CD4-positive, alpha-beta memory T cell (primary cell): ENCODE measurements at regions of chr7 and their contacts with region 1.

Region 1: GRCh38 chr7:44638611-44639557 is 32.5 kb downstream of the OGDH start:
- DNase-seq: peak; percentile 72 to 91 (median 79)
- H3K4me3 ChIP-seq: peak overlapping the region; percentile 0 to 48
- H3K4me3 Mint-ChIP-seq: peak overlapping the region; percentile 32 to 95 (median 90)
- H3K27ac ChIP-seq: peak overlapping the region; percentile 96
- H3K27ac Mint-ChIP-seq: peak overlapping the region; percentile 97 to 100 (median 100)
- H3K4me1 ChIP-seq: peaks cover 90% of the 10 kb centered on the region
- H3K4me1 Mint-ChIP-seq: peaks cover 57 to 87% (median 79%) of the 10 kb centered on the region in 4 donors
- H3K27me3 ChIP-seq: no peaks in the 10 kb centered on the region
- H3K27me3 Mint-ChIP-seq: no peaks in the 10 kb centered on the region

Region 2: GRCh38 chr7:44581879-44582603 is 56.8 kb before region 1 on chr7 and contains the start of gene TMED4:
- CTCF ChIA-PET with region 1: interaction called, 5 read pairs
- POLR2A ChIA-PET with region 1: interaction called, 94 read pairs
- intact Hi-C with region 1: no loop called
- DNase-seq: peak; percentile 100
- H3K4me3 ChIP-seq: peak within 1 kb of the TSS; percentile 79 to 98
- H3K4me3 Mint-ChIP-seq: peak within 1 kb of the TSS; percentile 90 to 95 (median 92)
- H3K27ac ChIP-seq: peak within 1 kb of the TSS; percentile 89
- H3K27ac Mint-ChIP-seq: peak within 1 kb of the TSS; percentile 97 to 99 (median 98)
- H3K4me1 ChIP-seq: peaks cover 34% of the 10 kb centered on the region
- H3K4me1 Mint-ChIP-seq: peaks cover 18 to 44% (median 32%) of the 10 kb centered on the region in 4 donors
- H3K27me3 ChIP-seq: no peaks in the 10 kb centered on the region
- H3K27me3 Mint-ChIP-seq: no peaks in the 10 kb centered on the region
- total RNA-seq, gene TMED4: 108 to 110 TPM

Region 3: DNA sequence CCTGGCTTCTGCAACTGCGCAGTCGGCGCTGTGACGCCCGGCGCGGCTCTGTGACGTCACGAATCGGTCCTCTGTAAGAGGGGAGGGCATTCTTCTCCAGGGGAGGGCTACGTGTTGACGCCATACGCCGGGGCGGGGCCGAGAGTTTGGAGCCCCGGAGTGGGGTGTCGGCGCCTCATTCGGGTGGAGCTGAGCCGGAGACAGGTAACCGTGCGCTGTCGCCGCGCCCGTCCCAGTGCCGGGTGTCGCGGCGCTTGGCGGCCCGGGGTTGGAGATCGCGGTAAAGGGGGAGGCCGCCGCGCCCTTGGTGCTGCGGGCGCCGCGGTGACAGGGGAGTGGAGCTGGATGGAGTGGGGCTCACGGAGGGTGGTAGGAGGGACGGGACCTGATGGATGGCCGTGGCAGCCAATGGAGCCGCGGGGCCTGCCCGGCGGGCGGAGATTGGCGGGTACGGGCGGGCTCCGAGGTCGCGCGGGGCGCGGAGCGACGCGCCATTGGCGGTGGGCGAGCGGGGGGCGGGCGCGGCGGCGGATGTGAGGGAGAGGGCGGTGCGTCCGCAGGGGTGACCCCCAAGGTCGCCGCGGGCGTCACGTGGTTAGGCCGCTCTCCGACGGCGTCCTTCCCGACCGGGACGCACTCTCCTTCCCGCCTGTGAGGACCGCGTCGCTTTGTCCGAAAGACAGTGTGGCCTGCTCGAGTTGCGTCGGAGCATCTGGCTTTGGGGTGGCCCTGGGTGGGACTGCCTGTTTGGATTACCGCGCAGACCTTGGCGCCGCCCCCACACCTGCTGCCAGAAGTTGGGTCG is 32.2 kb before region 1 on chr7 and contains the start of gene OGDH:
- CTCF ChIA-PET with region 1: interaction called, 48 read pairs
- POLR2A ChIA-PET with region 1: interaction called, 1,226 read pairs
- intact Hi-C with region 1: loop called (anchors 1 kb)
- DNase-seq: peak; percentile 99 to 100 (median 100)
- H3K4me3 ChIP-seq: peak within 1 kb of the TSS; percentile 54 to 63
- H3K4me3 Mint-ChIP-seq: peak within 1 kb of the TSS; percentile 82 to 100 (median 98)
- H3K27ac ChIP-seq: peak within 1 kb of the TSS; percentile 97
- H3K27ac Mint-ChIP-seq: peak within 1 kb of the TSS; percentile 99 to 100 (median 99)
- H3K4me1 ChIP-seq: peaks cover 40% of the 10 kb centered on the region
- H3K4me1 Mint-ChIP-seq: peaks cover 19 to 50% (median 38%) of the 10 kb centered on the region in 4 donors
- H3K27me3 ChIP-seq: no peaks in the 10 kb centered on the region
- H3K27me3 Mint-ChIP-seq: peaks cover 0 to 2% of the 10 kb centered on the region in 2 donors
- total RNA-seq, gene OGDH: 116 to 126 TPM

Region 4: DNA sequence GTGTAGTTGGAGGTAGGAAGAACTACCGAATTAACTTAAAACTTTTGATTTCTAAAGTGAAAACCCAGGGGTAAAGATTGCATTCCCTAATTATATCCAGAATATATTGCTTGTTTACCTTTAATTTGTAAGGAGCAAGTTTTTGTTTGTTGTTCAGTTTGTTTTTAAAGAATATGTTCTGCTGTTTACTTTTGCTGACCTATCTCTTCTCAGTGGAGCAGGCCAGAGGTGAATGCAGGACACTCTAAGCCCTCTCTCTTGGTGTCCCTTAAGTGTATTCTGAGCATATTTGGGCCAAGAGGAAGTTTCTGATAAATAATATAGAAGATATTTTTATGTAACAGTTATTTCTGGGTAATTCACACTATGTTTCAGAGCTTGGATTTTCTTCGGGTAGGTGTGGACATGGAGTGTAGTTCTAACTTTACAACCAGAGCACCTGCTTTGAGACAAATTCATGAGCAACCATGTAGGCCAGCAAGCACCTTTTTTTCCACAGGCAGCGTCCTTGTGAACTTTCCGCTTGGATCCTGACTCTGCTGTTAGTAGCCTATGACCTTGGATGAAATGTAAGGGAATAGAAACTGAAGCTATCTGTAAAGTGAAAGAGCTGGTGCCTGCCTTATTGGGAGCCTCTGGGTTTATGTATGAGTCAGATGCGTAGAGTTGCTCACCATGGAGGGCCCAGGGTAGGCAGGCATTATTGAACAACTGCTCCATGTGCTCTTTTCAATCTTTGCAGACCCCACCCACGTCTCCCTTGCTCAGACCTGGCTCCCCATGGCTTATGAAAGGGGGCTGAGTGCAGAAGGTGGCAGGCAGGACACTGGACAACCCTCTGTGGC is 16.4 kb before region 1 on chr7:
- CTCF ChIA-PET with region 1: interaction called, 44 read pairs
- POLR2A ChIA-PET with region 1: interaction called, 1,226 read pairs
- intact Hi-C with region 1: loop called (anchors 1 kb)
- DNase-seq: peak in 3 of 5 donors; percentile 35 to 60 (median 36)
- H3K4me3 ChIP-seq: peak overlapping the region in 1 of 2 donors; percentile 58
- H3K4me3 Mint-ChIP-seq: peak overlapping the region; percentile 57 to 95 (median 82)
- H3K27ac ChIP-seq: peak overlapping the region; percentile 74
- H3K27ac Mint-ChIP-seq: peak overlapping the region; percentile 91 to 99 (median 96)
- H3K4me1 ChIP-seq: peaks cover 98% of the 10 kb centered on the region
- H3K4me1 Mint-ChIP-seq: peaks cover 72 to 97% (median 86%) of the 10 kb centered on the region in 4 donors
- H3K27me3 ChIP-seq: no peaks in the 10 kb centered on the region
- H3K27me3 Mint-ChIP-seq: no peaks in the 10 kb centered on the region

Region 5: DNA sequence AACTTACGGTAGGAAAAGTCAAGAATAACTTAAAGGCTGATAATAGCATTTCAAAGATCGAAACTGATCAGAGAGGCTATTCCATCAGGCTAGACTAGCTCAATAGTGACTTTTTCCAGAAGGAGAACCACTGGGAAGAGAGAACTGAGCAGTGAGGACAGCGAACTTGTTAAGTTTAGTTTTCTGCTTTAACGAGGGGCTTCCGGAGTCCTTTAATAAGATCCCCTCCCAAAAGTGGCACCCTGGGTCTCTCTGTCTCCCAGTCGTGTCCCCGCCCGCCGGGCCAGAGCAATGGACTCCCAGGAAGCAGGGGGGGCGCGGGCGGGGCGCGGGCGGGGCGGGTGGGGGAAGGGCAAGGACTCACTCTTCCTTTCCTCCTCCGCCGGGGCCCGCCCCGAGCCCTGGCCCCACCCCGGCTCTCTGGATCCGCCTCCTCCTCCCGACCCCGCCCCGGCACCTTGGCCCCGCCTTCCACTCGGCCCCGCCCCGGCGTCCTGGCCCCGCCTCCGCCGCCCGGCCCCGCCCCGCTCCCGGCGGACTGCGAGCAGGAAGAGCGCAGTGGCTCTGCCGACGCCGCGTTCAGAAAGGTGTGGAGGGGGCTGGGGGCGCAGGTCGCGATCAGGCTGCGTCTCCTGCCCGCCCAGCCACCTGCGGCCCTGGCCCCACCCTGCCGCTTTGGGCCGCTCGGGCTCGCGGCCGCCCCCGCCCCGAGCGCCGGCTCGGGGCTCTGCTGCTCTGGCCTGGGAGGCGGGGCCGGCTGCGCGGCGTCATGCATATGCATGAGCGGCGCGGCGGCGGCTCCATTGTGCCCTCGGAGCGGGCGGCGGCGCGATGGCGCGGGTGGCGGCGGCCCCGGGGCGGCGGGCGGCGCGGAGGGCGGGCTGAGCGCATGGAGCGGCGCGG is 109.4 kb after region 1 on chr7 and contains the start of gene ZMIZ2:
- CTCF ChIA-PET with region 1: no interaction called
- POLR2A ChIA-PET with region 1: interaction called, 18 read pairs
- intact Hi-C with region 1: loop called (anchors 1 kb)
- DNase-seq: peak; percentile 88 to 98 (median 92)
- H3K4me3 ChIP-seq: peak within 1 kb of the TSS; percentile 44 to 78
- H3K4me3 Mint-ChIP-seq: peak within 1 kb of the TSS; percentile 80 to 95 (median 86)
- H3K27ac ChIP-seq: peak within 1 kb of the TSS; percentile 90
- H3K27ac Mint-ChIP-seq: peak within 1 kb of the TSS; percentile 89 to 98 (median 96)
- H3K4me1 ChIP-seq: peaks cover 44% of the 10 kb centered on the region
- H3K4me1 Mint-ChIP-seq: peaks cover 33 to 51% (median 38%) of the 10 kb centered on the region in 4 donors
- H3K27me3 ChIP-seq: no peaks in the 10 kb centered on the region
- H3K27me3 Mint-ChIP-seq: no peaks in the 10 kb centered on the region
- total RNA-seq, gene ZMIZ2: 169 to 170 TPM